Activated B cell treated with CpG ODN at 0.5 μM for 24 hours (primary cell): ENCODE measurements at regions of chr17 and their contacts with region 1.

Region 1: GRCh38 chr17:57552114-57552624 is 192.9 kb downstream of the CCDC182 start:
- DNase-seq: peak; percentile 46
- ATAC-seq: peak; percentile 56
- H3K4me3 Mint-ChIP-seq: peak overlapping the region; percentile 76
- H3K27ac Mint-ChIP-seq: peak overlapping the region; percentile 87
- H3K4me1 Mint-ChIP-seq: peaks cover 99% of the 10 kb centered on the region
- H3K27me3 Mint-ChIP-seq: no peaks in the 10 kb centered on the region
- CTCF ChIP-seq: no peak

Region 2: DNA sequence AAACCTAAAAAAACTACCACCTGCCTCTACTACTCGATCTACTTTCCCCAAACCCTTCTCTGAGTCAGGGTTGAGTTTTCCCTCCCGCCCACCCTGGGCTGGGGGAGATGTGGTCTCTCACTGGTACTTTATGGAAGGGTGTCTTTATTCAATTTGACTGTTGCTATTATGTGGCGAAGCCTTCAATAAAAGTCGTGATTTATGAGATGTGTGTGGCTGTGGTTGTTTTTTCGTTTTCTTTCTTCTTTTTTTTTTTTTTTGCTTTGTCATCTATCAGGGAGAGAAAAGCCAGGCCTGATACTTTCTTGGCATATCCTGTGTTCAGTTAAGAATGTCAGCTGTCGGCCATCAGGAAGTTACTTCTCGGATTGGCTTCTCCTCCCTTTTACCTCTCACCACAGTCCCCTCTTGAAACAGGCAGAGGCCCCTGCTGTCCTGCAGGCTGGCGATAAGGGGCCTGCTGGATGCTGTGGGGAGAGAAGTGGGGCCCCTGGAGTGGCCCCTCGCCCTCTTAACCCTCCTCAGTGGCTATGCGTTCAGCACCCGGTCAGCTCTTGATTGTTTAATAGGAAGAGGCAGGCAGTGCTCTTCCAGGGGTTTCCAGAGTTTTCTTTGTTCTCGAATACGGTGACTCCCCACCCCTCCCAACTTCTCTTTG is 172.8 kb before region 1 on chr17:
- CTCF ChIA-PET with region 1: no interaction called
- POLR2A ChIA-PET with region 1: no interaction called
- intact Hi-C with region 1: no loop called
- DNase-seq: no peak
- ATAC-seq: no peak
- H3K4me3 Mint-ChIP-seq: no peak overlapping the region
- H3K27ac Mint-ChIP-seq: peak overlapping the region; percentile 51
- H3K4me1 Mint-ChIP-seq: peaks cover 13% of the 10 kb centered on the region
- H3K27me3 Mint-ChIP-seq: no peaks in the 10 kb centered on the region
- CTCF ChIP-seq: no peak

Region 3: DNA sequence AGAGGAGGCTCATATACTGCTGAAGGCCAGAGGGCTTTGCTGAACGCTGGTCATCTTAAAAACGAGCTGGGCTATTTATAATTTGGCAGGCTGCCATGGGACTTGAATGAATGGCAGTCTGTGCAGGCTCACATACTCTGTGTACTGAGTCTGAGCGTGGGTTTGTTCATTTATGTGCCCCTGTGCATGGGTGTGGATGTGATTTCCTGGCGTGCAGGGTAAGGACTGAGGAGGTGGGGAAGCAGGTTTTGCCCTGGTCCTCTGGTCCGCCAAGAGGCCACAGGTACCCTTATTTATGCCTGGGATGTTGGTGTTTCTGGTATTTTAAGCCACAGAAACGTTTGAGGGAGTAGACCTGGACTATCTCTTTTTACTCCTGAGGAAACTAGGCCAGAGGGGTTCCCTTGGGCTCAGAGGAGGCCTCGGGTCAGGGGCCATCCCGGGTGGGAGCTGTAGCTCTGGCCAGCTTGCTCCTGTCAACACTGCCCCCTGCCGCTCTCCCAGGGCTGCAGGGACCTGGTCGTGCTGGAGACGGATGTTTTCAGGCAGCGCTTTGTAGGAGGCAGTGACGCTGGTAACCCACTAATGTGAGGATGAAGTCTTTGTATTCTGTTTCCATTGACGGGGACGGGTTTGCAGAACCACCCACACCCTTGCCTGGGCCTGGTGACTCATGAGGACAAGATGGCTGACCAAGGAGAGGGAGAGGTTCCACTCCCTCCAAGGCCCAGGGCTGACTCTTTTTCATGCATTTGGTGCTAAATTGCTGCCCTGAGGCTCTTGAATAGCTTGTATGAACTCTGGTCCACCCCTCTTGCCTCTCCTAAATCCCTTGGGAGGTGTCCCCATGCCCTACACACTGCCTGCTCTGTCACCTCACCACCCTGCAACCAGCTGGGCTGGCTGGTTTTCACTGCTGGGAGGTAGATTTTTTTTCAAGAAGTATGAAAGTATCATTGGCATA is 111.4 kb before region 1 on chr17:
- CTCF ChIA-PET with region 1: no interaction called
- POLR2A ChIA-PET with region 1: interaction called, 6 read pairs
- intact Hi-C with region 1: loop called (anchors 2 kb)
- DNase-seq: no peak
- ATAC-seq: peak; percentile 74
- H3K4me3 Mint-ChIP-seq: peak overlapping the region; percentile 32
- H3K27ac Mint-ChIP-seq: peak overlapping the region; percentile 81
- H3K4me1 Mint-ChIP-seq: peaks cover 91% of the 10 kb centered on the region
- H3K27me3 Mint-ChIP-seq: no peaks in the 10 kb centered on the region
- CTCF ChIP-seq: no peak

Region 4: GRCh38 chr17:57597531-57598453 is 45.6 kb after region 1 on chr17:
- CTCF ChIA-PET with region 1: interaction called, 17 read pairs
- POLR2A ChIA-PET with region 1: interaction called, 34 read pairs
- intact Hi-C with region 1: no loop called
- DNase-seq: no peak
- ATAC-seq: no peak
- H3K4me3 Mint-ChIP-seq: no peak overlapping the region
- H3K27ac Mint-ChIP-seq: peak overlapping the region; percentile 46
- H3K4me1 Mint-ChIP-seq: peaks cover 33% of the 10 kb centered on the region
- H3K27me3 Mint-ChIP-seq: no peaks in the 10 kb centered on the region
- CTCF ChIP-seq: peak; percentile 16

Region 5: DNA sequence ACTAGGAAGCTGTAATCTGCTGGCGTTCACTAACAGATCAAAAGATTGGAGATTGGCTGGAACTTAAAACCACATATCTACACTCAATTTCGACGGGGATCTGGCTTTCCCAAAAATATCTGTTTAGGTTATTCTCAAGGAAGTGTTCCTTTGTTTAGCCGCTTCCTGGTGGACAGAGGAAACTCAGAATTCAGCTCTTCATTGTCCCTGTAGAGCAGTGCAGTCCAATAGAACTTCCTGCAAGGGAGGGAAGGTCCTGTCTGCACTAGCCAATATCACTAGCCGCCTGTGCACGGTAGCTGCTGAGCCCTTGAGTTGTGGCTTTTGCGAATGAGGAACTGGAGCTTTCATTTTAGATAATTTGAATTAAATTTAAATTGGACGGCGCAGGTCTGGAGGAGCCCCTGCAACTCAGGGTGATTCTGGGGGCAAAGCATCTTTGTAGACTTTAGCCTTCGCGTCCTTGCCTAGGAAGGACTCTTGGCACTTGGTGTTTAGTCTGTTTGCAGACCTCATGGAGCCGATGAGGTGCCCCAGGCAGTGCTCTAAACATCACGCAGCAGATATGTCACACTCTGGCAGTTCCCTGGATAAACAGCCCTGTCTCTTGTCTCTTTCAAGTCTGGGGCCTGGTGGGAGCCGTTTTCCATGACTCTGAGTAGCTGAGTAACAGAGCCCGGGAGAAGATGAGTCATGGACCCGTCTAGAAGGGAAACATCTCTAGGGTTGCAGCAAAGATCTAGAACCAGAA is 70.7 kb after region 1 on chr17:
- CTCF ChIA-PET with region 1: interaction called, 4 read pairs
- POLR2A ChIA-PET with region 1: interaction called, 10 read pairs
- intact Hi-C with region 1: no loop called
- DNase-seq: no peak
- ATAC-seq: peak; percentile 82
- H3K4me3 Mint-ChIP-seq: peak overlapping the region; percentile 77
- H3K27ac Mint-ChIP-seq: peak overlapping the region; percentile 89
- H3K4me1 Mint-ChIP-seq: peaks cover 60% of the 10 kb centered on the region
- H3K27me3 Mint-ChIP-seq: no peaks in the 10 kb centered on the region
- CTCF ChIP-seq: no peak

Region 6: DNA sequence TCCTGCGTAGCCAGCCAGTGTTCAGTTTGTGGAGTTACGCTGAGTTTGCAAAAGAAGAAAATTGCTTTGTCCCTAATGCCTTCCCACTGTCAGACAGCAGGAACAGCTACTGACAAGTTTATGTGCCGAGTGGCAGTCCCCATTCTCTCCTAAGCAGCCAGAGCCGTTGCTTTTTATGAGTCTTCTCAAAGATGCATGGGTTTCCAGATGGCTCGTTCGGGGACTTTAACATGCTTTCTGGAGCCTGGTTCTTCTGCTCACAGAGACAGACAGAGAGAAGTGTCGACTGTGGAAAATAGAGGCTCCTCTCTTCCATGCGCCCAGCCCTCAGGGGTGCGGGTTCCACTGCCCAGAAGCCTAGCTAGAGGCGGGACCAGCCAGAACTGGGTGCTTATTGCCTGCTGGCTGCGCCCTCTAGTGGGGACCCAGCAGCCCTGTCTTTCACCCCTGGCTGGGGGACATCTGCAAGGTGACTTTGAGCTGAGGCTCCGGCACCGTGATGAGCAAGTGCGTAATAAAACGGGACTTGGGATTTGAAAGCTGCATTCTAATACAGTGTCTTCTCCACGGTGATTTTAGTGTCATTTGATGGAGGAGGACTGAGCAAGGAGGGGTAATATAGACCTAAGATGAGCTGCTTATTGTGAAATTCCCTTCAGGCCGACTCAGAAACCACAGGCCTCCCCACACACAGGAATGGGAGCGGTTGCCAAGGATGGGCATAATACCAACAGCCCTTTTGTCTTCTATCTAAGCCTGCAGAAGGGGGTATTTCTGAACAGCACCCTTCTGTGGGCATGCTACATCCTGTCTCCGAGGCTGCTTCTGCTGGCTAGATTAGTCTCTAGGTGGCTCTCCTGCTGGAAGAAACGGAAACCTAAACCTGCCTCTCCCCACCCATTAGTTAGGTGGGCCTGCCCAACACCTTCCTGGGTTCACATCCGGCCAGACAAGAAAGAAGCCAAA is 119.8 kb after region 1 on chr17:
- CTCF ChIA-PET with region 1: interaction called, 25 read pairs
- POLR2A ChIA-PET with region 1: no interaction called
- intact Hi-C with region 1: loop called (anchors 1 kb)
- DNase-seq: peak; percentile 56
- ATAC-seq: peak; percentile 91
- H3K4me3 Mint-ChIP-seq: no peak overlapping the region
- H3K27ac Mint-ChIP-seq: no peak overlapping the region
- H3K4me1 Mint-ChIP-seq: peaks cover 8% of the 10 kb centered on the region
- H3K27me3 Mint-ChIP-seq: no peaks in the 10 kb centered on the region
- CTCF ChIP-seq: peak; percentile 88